Uterus (tissue), 4 donors: ENCODE measurements at regions of chr17 and their contacts with region 1.

Region 1: GRCh38 chr17:40803617-40804082 is 3.9 kb upstream of the KRT28 start:
- DNase-seq: peak; percentile 69 to 76
- H3K4me3 ChIP-seq: no peak overlapping the region
- H3K27ac ChIP-seq: no peak overlapping the region
- H3K4me1 ChIP-seq: peaks cover 0 to 4% of the 10 kb centered on the region in 2 donors
- H3K27me3 ChIP-seq: no peaks in the 10 kb centered on the region
- CTCF ChIP-seq: peak; percentile 72 to 84 (median 78)
- POLR2A ChIP-seq: no peak

Region 2: DNA sequence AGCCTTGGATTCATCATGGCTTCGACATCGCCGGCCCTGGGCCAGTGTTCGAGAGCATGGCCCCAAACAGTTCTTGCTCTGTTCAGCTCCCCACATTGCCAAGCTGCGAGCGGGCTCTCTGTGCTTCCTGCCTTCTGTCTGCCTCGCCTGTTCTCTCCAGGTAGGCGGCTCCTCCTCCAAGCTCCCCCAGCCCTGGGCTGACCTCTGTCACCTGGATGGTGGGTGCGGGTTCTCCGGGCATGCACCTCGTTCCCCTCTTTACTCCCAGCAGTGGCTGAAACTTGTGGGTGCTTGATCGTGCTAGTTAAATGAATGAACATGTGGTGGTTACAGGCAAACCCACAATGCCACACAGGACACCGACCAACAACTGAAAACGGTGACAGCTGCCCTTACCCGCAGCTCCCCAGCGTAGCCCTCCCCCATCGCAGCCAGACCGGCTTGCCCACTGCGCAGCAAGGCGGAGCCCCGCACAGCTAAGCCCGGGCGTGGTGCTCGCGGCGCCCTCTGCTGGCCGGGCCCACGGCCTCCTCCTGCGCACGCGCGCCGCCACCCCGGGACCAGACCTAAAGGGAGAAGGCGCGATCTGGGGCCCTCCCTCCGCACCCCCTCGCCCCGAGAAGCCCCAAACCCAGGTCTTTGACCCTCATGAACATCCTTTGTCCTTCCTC is 862.1 kb after region 1 on chr17:
- intact Hi-C with region 1: loop called (anchors 10 kb)
- DNase-seq: peak; percentile 79 to 88
- H3K4me3 ChIP-seq: peak overlapping the region; percentile 45 to 52
- H3K27ac ChIP-seq: peak overlapping the region; percentile 84 to 96
- H3K4me1 ChIP-seq: peaks cover 0 to 4% of the 10 kb centered on the region in 2 donors
- H3K27me3 ChIP-seq: no peaks in the 10 kb centered on the region
- CTCF ChIP-seq: peak; percentile 91 to 98 (median 96)
- POLR2A ChIP-seq: peak; percentile 65 to 71